Left ventricle myocardium inferior (tissue), 1 donor: ENCODE measurements at regions of chrX and their contacts with region 1.

Region 1: DNA sequence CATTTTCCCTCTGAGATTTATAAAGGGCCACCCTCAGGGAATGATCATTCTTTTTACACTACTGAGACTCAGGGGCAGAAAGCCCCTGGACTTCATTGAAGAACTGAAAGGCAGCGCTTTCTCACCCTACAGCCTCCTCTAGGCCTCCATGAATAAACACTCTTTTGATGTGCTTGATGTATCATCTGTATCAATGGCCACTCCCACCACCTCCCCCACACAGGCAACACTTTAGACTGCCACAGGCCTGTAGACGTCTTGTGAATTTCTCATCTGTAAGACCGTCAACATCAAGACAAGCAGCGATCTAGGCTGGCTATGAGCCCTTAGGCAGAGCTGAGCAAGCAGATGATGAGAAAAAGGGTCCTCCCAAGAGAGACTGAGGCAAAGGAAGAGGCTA is 123.2 kb downstream of the HUWE1 start:
- DNase-seq: no peak
- H3K4me3 ChIP-seq: no peak overlapping the region
- H3K27ac ChIP-seq: no peak overlapping the region
- H3K4me1 ChIP-seq: no peaks in the 10 kb centered on the region
- H3K27me3 ChIP-seq: no peaks in the 10 kb centered on the region
- CTCF ChIP-seq: no peak

Region 2: GRCh38 chrX:53403535-53403934 is 159.8 kb before region 1 on chrX:
- intact Hi-C with region 1: no loop called
- DNase-seq: no peak
- H3K4me3 ChIP-seq: no peak overlapping the region
- H3K27ac ChIP-seq: no peak overlapping the region
- H3K4me1 ChIP-seq: no peaks in the 10 kb centered on the region
- H3K27me3 ChIP-seq: no peaks in the 10 kb centered on the region
- CTCF ChIP-seq: no peak

Region 3: GRCh38 chrX:53616946-53617345 is 53.6 kb after region 1 on chrX:
- intact Hi-C with region 1: loop called (anchors 10 kb)
- DNase-seq: no peak
- H3K4me3 ChIP-seq: no peak overlapping the region
- H3K27ac ChIP-seq: no peak overlapping the region
- H3K4me1 ChIP-seq: no peaks in the 10 kb centered on the region
- H3K27me3 ChIP-seq: no peaks in the 10 kb centered on the region
- CTCF ChIP-seq: no peak

Region 4: GRCh38 chrX:53631156-53631555 is 67.8 kb after region 1 on chrX:
- intact Hi-C with region 1: no loop called
- DNase-seq: no peak
- H3K4me3 ChIP-seq: no peak overlapping the region
- H3K27ac ChIP-seq: no peak overlapping the region
- H3K4me1 ChIP-seq: no peaks in the 10 kb centered on the region
- H3K27me3 ChIP-seq: no peaks in the 10 kb centered on the region
- CTCF ChIP-seq: no peak

Region 5: GRCh38 chrX:54024350-54024749 is 461.0 kb after region 1 on chrX:
- intact Hi-C with region 1: no loop called
- DNase-seq: no peak
- H3K4me3 ChIP-seq: no peak overlapping the region
- H3K27ac ChIP-seq: no peak overlapping the region
- H3K4me1 ChIP-seq: no peaks in the 10 kb centered on the region
- H3K27me3 ChIP-seq: no peaks in the 10 kb centered on the region
- CTCF ChIP-seq: no peak